Panc1 (cell line): ENCODE measurements at regions of chr15 and their contacts with region 1.

Region 1: DNA sequence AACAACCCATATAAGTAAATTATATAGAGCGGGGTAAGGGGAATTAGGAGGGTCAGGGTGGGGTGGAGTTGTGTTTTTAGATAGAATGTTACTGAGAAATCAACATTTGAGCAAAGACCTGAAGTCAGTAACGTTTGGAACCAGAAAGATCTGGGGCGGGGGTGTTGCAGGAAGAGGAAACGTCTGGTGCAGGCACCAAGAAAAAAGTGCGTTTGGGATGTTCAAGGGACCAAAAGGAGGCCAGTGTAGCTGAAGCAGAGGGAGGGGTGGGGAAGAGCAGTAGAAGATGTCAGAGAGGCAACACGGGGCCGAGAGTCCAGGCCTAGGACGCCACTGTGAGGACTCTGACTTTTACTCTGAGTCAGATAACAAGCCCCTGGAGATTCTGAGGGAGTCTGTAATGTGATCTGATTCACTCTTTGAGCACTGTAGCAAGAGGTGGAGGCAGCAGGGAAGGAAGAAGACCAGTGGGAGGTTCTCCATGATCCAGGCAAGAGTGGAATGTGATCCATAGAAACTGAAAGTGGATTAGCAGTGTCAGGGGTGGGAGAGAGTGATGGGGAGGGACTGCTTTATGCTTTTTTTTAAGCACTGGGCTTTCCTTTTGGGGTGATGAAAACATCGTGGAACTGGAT is 179.3 kb upstream of the CHRM5 start:
- DNase-seq: no peak
- ATAC-seq: no peak
- H3K4me3 ChIP-seq: peak overlapping the region in 1 of 2 experiments; percentile 16; a peak in 1 of 4 replicates
- H3K27ac ChIP-seq: no peak overlapping the region
- H3K4me1 ChIP-seq: no peaks in the 10 kb centered on the region
- H3K27me3 ChIP-seq: 0 out of 2 replicates have a peak, but pooled peaks cover 2% of the 10 kb centered on the region
- CTCF ChIP-seq: no peak

Region 2: GRCh38 chr15:33963831-33964664 is 175.0 kb after region 1 on chr15:
- CTCF ChIA-PET with region 1: interaction called, 12 read pairs
- POLR2A ChIA-PET with region 1: no interaction called
- in situ Hi-C with region 1: no loop called
- intact Hi-C with region 1: no loop called
- DNase-seq: peak; percentile 28
- ATAC-seq: peak; percentile 82
- H3K4me3 ChIP-seq: no peak overlapping the region
- H3K27ac ChIP-seq: no peak overlapping the region
- H3K4me1 ChIP-seq: no peaks in the 10 kb centered on the region; the same call in 1 of the 2 replicates
- H3K27me3 ChIP-seq: no peaks in the 10 kb centered on the region
- CTCF ChIP-seq: peak; percentile 75; the same call in 1 of the 2 replicates